Lower leg skin (tissue), 4 donors: ENCODE measurements at regions of chr5 and their contacts with region 1.

Region 1: DNA sequence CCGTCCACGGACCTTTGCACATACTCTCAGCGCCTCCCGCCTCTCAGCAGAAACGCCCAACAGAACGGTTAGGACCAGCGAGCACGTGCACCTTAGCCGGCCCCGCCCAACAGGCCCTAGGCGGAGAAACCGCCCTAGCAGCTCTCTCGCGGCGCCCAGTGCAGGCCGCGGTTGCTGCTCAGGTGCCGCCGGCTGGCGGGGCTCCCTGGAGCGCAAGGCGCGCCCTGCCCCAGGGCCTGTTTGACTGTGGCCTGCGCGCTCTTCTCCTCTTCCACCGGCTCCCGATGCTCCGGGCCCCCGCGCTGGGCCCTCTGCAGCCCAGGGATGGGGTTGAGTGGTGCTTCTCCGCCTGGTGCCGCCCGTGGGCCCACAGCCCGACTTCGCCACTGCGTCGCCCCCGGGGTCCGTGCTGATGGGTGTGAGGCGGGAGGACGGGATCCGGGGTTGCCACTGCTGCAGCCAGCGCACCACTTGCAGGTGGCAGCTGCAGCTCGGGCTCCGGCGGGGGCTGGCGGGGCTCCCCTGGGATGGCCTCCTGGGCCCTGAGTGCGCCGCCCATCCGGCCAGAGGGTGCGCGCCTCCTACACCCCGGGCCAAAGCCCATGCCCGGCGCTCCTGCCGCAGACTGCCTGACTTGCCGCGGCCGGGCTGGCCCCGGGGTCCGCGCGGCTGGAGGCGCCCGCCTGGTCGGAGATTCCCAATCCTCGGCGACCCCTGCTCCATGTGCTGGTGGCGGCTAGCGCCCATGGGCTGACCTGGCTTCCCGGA is 1889.4 kb upstream of the CDH9 start:
- DNase-seq: no peak
- H3K4me3 ChIP-seq: no peak overlapping the region
- CTCF ChIP-seq: no peak
- POLR2A ChIP-seq: no peak

Region 2: DNA sequence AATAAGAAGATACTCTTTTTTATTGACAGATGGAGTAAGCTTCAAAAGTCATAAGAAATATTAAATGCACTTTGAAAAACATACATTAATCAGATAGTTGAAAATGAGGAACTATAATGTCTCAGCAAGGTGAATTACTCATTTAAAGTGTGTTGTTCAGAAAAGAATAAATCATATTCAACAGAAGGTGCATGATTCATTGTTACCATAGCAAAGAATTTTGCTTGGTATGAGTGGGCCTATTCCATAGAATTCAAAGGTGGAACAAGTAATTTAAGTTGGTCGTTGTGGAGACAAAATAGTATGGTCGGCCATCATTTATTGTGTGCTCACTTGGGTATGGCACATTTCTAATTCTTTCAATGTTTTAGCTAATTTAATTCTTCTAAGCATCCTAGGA is 30.8 kb after region 1 on chr5:
- intact Hi-C with region 1: loop called (anchors 2 kb)
- DNase-seq: no peak
- H3K4me3 ChIP-seq: no peak overlapping the region
- CTCF ChIP-seq: no peak
- POLR2A ChIP-seq: no peak